Heart left ventricle (tissue), 16 donors: ENCODE measurements at regions of chr10 and their contacts with region 1.

Region 1: GRCh38 chr10:105262666-105263065 is 621.6 kb downstream of the SORCS3 start:
- DNase-seq: no peak
- ATAC-seq: no peak
- H3K4me3 ChIP-seq: no peak overlapping the region
- H3K27ac ChIP-seq: no peak overlapping the region
- H3K4me1 ChIP-seq: no peaks in the 10 kb centered on the region
- H3K27me3 ChIP-seq: no peaks in the 10 kb centered on the region
- CTCF ChIP-seq: no peak
- POLR2A ChIP-seq: no peak

Region 2: GRCh38 chr10:105207476-105208000 is 55.1 kb before region 1 on chr10:
- intact Hi-C with region 1: loop called in 1 of 10 experiments (anchors 10 kb)
- DNase-seq: no peak
- ATAC-seq: no peak
- H3K4me3 ChIP-seq: no peak overlapping the region
- H3K27ac ChIP-seq: no peak overlapping the region
- H3K4me1 ChIP-seq: no peaks in the 10 kb centered on the region
- H3K27me3 ChIP-seq: no peaks in the 10 kb centered on the region
- CTCF ChIP-seq: no peak
- POLR2A ChIP-seq: no peak